Mammary epithelial cell (primary cell): ENCODE measurements at regions of chr18 and their contacts with region 1.

Region 1: DNA sequence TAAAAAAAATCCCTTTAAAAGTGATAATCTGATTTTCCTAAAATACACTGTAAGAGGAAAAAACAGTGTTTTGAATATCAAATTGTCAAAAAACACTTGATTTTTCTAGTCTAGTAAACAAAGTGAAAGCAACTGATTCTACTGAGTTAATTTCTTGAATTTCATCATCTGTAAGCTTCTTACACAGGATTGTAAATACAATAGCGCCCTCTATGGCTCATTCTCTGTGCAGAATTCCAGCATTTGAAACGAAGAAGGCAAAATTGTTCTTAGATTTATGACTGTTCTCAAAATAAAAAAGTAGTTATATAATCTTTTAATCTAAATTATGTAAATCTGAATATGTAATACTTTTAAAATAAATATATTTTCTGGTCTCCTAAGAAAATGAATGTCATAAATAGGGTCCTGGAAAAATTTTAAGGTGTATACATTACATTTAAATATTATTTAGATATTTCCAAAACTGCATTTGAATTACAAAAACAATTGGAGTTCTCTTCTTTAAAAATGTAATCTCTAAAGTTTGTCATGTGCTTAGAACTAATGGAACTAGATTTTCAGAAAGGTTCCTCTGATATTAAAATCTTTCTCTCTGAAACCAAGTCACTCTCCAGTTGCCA is 176.9 kb upstream of the MC4R start:
- DNase-seq: peak; percentile 35
- H3K4me3 ChIP-seq: no peak overlapping the region
- H3K27ac ChIP-seq: no peak overlapping the region
- H3K4me1 ChIP-seq: no peaks in the 10 kb centered on the region
- H3K27me3 ChIP-seq: no peaks in the 10 kb centered on the region
- CTCF ChIP-seq: peak; percentile 82 to 87

Region 2: DNA sequence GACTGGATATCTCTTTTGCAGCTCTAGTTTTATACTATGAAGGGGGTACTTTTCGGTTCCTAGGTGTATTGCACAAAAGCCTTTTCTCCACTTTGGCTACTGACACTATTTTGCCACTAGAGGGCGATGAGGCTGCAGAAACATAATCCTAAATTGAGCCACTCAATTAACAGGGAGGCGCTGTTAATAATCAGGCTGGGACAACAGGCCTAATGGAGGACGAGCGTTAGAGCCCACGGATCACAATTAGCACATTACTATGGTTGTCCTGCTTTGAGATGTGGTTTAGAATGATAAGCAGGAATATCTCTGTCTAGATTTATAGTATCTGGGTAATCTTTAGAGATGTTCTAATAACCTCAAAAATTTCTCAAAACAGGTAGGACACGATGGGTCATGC is 711.9 kb before region 1 on chr18:
- CTCF ChIA-PET with region 1: no interaction called
- dilution Hi-C with region 1: no loop called
- in situ Hi-C with region 1: loop called in 1 of 2 experiments (anchors 25 kb)
- intact Hi-C with region 1: loop called (anchors 2 kb)
- DNase-seq: peak; percentile 64
- H3K4me3 ChIP-seq: no peak overlapping the region
- H3K27ac ChIP-seq: no peak overlapping the region
- H3K4me1 ChIP-seq: no peaks in the 10 kb centered on the region
- H3K27me3 ChIP-seq: no peaks in the 10 kb centered on the region
- CTCF ChIP-seq: peak; percentile 91 to 95

Region 3: GRCh38 chr18:59861963-59862819 is 687.3 kb before region 1 on chr18:
- CTCF ChIA-PET with region 1: no interaction called
- dilution Hi-C with region 1: no loop called
- in situ Hi-C with region 1: loop called in 1 of 2 experiments (anchors 25 kb)
- intact Hi-C with region 1: no loop called
- DNase-seq: peak; percentile 70
- H3K4me3 ChIP-seq: no peak overlapping the region
- H3K27ac ChIP-seq: peak overlapping the region; percentile 14
- H3K4me1 ChIP-seq: peaks cover 30% of the 10 kb centered on the region
- H3K27me3 ChIP-seq: no peaks in the 10 kb centered on the region
- CTCF ChIP-seq: no peak

Region 4: DNA sequence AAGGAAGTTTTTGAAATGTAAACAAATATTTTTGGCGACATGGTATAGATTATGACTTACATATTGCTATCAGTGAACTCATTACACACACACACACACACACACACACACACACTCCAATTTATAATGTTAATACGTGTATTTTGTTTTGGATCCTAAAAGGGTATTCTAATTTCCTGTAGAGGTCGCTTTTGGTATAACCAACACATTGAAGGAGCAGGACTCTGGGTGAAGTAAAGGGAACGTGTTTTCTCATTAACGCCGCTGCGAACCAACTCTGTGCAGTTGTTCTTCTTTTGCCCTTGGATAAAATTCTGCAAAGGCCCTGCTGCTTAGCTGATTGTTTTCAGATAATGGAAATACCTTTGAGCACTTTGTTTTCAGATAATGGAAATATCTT is 459.3 kb before region 1 on chr18:
- CTCF ChIA-PET with region 1: no interaction called
- dilution Hi-C with region 1: no loop called
- in situ Hi-C with region 1: no loop called
- intact Hi-C with region 1: loop called (anchors 10 kb)
- DNase-seq: no peak
- H3K4me3 ChIP-seq: no peak overlapping the region
- H3K27ac ChIP-seq: no peak overlapping the region
- H3K4me1 ChIP-seq: no peaks in the 10 kb centered on the region
- H3K27me3 ChIP-seq: no peaks in the 10 kb centered on the region
- CTCF ChIP-seq: peak in 1 of 2 donors; percentile 34

Region 5: DNA sequence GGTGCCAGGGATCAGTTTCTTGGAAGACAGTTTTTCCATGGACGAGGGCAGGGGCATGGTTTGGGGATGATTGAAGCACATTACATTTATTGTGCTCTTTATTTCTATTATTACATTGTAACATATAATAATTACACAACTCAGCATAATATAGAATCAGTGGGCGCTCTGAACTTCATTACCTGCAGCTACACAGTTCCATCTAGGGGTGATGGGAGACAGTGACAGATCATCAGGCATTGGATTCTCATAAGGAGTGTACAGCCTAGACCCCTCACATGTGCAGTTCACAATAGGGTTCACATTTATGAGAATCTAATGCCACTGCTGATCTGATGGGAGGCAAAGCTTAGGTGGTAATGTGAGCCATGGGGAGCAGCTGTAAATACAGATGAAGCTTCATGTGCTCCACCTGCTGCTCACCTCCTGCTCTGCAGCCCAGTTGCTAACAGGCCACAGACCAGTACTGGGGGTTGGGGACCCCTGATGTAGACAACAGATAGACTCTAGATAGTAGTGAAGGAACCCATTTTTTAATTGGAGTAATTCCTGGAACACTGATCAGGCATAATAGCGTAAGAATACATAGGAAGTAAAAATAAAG is 135.4 kb before region 1 on chr18:
- CTCF ChIA-PET with region 1: no interaction called
- dilution Hi-C with region 1: no loop called
- in situ Hi-C with region 1: no loop called
- intact Hi-C with region 1: loop called (anchors 10 kb)
- DNase-seq: peak; percentile 1
- H3K4me3 ChIP-seq: no peak overlapping the region
- H3K27ac ChIP-seq: no peak overlapping the region
- H3K4me1 ChIP-seq: no peaks in the 10 kb centered on the region
- H3K27me3 ChIP-seq: peaks cover 3% of the 10 kb centered on the region
- CTCF ChIP-seq: peak; percentile 29 to 75